HCT116 (cell line): ENCODE measurements at regions of chr7 and their contacts with region 1.

Region 1: DNA sequence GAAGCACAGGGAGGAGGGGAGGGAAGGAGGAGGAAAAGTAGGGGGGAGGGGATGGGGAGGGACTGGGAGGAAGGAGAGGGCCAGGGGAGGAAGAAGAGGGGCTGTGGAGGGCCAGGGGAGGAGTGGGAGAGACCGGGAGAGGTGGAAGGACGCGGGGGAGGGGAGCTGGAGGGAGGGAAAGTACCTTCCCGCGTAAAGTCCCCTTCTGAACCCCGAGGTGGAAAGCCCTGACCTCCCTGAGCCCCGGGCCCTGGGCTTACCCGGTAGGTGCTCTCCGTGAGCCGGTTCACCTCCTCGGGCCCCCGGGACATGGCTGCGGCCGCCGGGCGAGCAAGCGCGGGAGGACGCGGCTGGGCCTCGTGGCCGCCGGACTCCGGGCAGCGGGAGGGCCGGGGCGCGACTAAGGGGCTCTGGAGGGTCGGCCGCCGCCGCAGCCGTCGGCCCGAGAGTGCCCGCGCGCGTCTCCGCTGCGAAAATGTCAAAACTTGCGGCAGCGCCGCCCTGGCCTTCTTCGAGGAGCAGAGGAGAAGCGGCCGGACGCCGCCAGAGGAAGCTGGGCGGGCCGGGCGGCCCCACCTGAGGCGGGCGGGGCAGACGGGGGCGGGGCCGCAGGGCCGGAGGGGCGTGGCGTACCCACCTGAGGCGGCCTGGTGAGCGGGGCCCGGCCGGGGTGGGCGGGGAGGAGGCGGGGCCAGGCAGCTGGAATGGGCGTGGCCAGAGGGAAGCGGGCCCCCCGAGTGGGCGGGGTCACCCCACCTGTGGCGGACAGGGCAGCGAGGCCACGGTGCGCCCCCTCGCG is at the start of gene BAIAP2L1:
- DNase-seq: peak; percentile 82
- ATAC-seq: peak; percentile 95
- H3K4me3 ChIP-seq: peak within 1 kb of the TSS; percentile 58 to 91
- H3K27ac ChIP-seq: peak within 1 kb of the TSS; percentile 94
- H3K4me1 ChIP-seq: peaks cover 16 to 44% of the 10 kb centered on the region in 2 experiments; a peak in 3 of 4 replicates
- H3K27me3 ChIP-seq: no peaks in the 10 kb centered on the region
- CTCF ChIP-seq: no peak; a peak in 1 of 6 replicates
- POLR2A ChIP-seq: no peak
- RAD21 ChIP-seq: peak; percentile 91
- total RNA-seq, gene BAIAP2L1: 61.2 TPM

Region 2: DNA sequence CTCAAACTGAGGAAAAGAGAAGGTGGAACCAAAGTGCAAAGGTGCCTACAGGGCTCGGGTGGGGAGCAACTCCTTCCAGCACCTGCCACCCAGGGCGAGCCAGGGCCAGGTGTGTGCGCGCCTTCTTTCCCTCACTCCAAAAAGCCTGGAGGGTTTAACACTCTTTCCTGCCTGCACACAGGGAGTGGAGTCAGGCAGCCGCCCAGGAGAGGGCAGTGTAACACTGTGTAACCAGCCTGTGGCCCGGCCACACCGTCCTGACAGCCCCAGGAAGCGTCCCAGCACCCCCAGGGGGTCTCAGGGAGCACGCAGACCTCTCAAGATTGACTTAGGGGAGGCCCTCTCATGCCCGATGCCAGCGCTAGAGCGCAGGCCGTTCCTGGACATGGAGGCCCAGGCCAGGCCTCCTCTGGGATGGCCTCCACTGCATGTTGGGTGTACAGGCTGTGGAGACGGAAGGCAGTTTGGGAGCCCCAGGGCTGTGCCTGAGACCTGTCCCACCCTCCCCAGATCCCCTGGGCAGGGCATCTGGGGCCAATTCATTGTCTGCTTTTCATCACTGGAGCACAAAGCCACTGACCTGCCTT is 105.9 kb before region 1 on chr7:
- CTCF ChIA-PET with region 1: interaction called, 7 read pairs
- POLR2A ChIA-PET with region 1: no interaction called
- RAD21 ChIA-PET with region 1: interaction called, 3 to 4 read pairs
- intact Hi-C with region 1: loop called (anchors 1 kb)
- DNase-seq: peak; percentile 41
- ATAC-seq: peak; percentile 93
- H3K4me3 ChIP-seq: no peak overlapping the region
- H3K27ac ChIP-seq: peak overlapping the region; percentile 21; the same call in 1 of the 2 replicates
- H3K4me1 ChIP-seq: peaks cover 0 to 13% of the 10 kb centered on the region in 2 experiments; a peak in 2 of 4 replicates
- H3K27me3 ChIP-seq: no peaks in the 10 kb centered on the region
- CTCF ChIP-seq: peak; percentile 79 to 86 (median 82); a peak in 5 of 6 replicates
- POLR2A ChIP-seq: no peak
- RAD21 ChIP-seq: peak; percentile 98

Region 3: GRCh38 chr7:98322331-98323270 is 78.1 kb before region 1 on chr7:
- CTCF ChIA-PET with region 1: interaction called, 6 read pairs
- POLR2A ChIA-PET with region 1: no interaction called
- RAD21 ChIA-PET with region 1: interaction called in 1 of 2 experiments, 5 read pairs
- intact Hi-C with region 1: loop called (anchors 1 kb)
- DNase-seq: no peak
- ATAC-seq: peak; percentile 77
- H3K4me3 ChIP-seq: no peak overlapping the region
- H3K27ac ChIP-seq: no peak overlapping the region
- H3K4me1 ChIP-seq: no peaks in the 10 kb centered on the region
- H3K27me3 ChIP-seq: no peaks in the 10 kb centered on the region
- CTCF ChIP-seq: peak; percentile 24 to 30 (median 24); a peak in 3 of 6 replicates
- POLR2A ChIP-seq: no peak
- RAD21 ChIP-seq: peak; percentile 59

Region 4: GRCh38 chr7:98439484-98439883 is 38.7 kb after region 1 on chr7:
- CTCF ChIA-PET with region 1: no interaction called
- POLR2A ChIA-PET with region 1: no interaction called
- RAD21 ChIA-PET with region 1: no interaction called
- intact Hi-C with region 1: no loop called
- DNase-seq: no peak
- ATAC-seq: no peak
- H3K4me3 ChIP-seq: no peak overlapping the region
- H3K27ac ChIP-seq: no peak overlapping the region
- H3K4me1 ChIP-seq: no peaks in the 10 kb centered on the region
- H3K27me3 ChIP-seq: no peaks in the 10 kb centered on the region
- CTCF ChIP-seq: no peak
- POLR2A ChIP-seq: no peak
- RAD21 ChIP-seq: no peak